ENCODE measurements at regions of chr3 and their contacts with region 1.

Region 1: DNA sequence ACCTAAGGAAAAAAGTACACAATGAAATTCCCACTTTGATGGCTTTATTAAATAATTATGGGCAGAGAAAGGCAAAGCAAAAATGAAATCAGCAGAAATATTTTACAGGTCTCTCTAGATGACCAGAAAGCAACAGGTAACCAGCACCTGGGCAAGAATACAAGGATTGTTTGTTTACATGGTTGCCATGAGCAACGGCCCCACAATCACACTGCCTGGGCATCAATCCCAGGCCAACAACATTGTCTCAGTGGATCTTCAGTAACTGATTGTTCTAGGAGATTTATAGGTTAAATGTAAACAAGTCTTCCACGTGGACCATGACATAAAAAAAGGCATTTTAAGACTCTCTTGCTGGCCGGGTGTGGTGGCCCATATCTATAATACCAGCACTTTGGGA is 82.6 kb downstream of the PDZRN3 start:
- DNase-seq: peak; percentile 50
- H3K4me3 ChIP-seq: no peak overlapping the region
- H3K27ac ChIP-seq: peak overlapping the region in 3 of 4 donors; percentile 32 to 52 (median 39)
- H3K4me1 ChIP-seq: peaks cover 0 to 49% (median 10%) of the 10 kb centered on the region in 4 donors
- H3K27me3 ChIP-seq: no peaks in the 10 kb centered on the region
- CTCF ChIP-seq: no peak
- EP300 ChIP-seq: no peak
- POLR2A ChIP-seq: no peak

Region 2: GRCh38 chr3:73502609-73503583 is 39.2 kb before region 1 on chr3:
- in situ Hi-C with region 1: no loop called
- intact Hi-C with region 1: no loop called
- DNase-seq: peak; percentile 75
- H3K4me3 ChIP-seq: no peak overlapping the region
- H3K27ac ChIP-seq: peak overlapping the region; percentile 15 to 35 (median 32)
- H3K4me1 ChIP-seq: peaks cover 10 to 28% (median 14%) of the 10 kb centered on the region in 4 donors
- H3K27me3 ChIP-seq: no peaks in the 10 kb centered on the region
- CTCF ChIP-seq: peak; percentile 77 to 87 (median 79)
- EP300 ChIP-seq: no peak
- POLR2A ChIP-seq: no peak

Region 3: GRCh38 chr3:73530022-73530396 is 12.1 kb before region 1 on chr3:
- in situ Hi-C with region 1: no loop called
- intact Hi-C with region 1: loop called (anchors 1 kb)
- DNase-seq: no peak
- H3K4me3 ChIP-seq: no peak overlapping the region
- H3K27ac ChIP-seq: peak overlapping the region; percentile 48 to 66 (median 60)
- H3K4me1 ChIP-seq: peaks cover 0 to 25% (median 10%) of the 10 kb centered on the region in 4 donors
- H3K27me3 ChIP-seq: no peaks in the 10 kb centered on the region
- CTCF ChIP-seq: no peak
- EP300 ChIP-seq: no peak
- POLR2A ChIP-seq: no peak